ENCODE measurements at regions of chr1 and their contacts with region 1.

Region 1: GRCh38 chr1:223683586-223684487 is 18.3 kb upstream of the CAPN8 start:
- DNase-seq: peak in 8 of 9 donors; percentile 26 to 69 (median 50)
- ATAC-seq: peak; percentile 81
- H3K4me3 ChIP-seq: no peak overlapping the region
- H3K4me3 Mint-ChIP-seq: no peak overlapping the region
- H3K27ac ChIP-seq: no peak overlapping the region
- H3K27ac Mint-ChIP-seq: no peak overlapping the region
- H3K4me1 ChIP-seq: no peaks in the 10 kb centered on the region
- H3K4me1 Mint-ChIP-seq: no peaks in the 10 kb centered on the region
- H3K27me3 ChIP-seq: no peaks in the 10 kb centered on the region
- H3K27me3 Mint-ChIP-seq: peaks cover 0 to 30% (median 6%) of the 10 kb centered on the region in 5 donors

Region 2: GRCh38 chr1:222736972-222737371 is 946.9 kb before region 1 on chr1 and contains the start of gene FAM177B:
- CTCF ChIA-PET with region 1: interaction called, 3 read pairs
- POLR2A ChIA-PET with region 1: no interaction called
- intact Hi-C with region 1: loop called in 1 of 2 experiments (anchors 1 kb)
- DNase-seq: no peak
- ATAC-seq: no peak
- H3K4me3 ChIP-seq: no peak within 1 kb of the TSS
- H3K4me3 Mint-ChIP-seq: no peak within 1 kb of the TSS
- H3K27ac ChIP-seq: no peak within 1 kb of the TSS
- H3K27ac Mint-ChIP-seq: no peak within 1 kb of the TSS
- H3K4me1 ChIP-seq: no peaks in the 10 kb centered on the region
- H3K4me1 Mint-ChIP-seq: peaks cover 0 to 7% (median 0%) of the 10 kb centered on the region in 7 donors
- H3K27me3 ChIP-seq: no peaks in the 10 kb centered on the region
- H3K27me3 Mint-ChIP-seq: no peaks in the 10 kb centered on the region
- total RNA-seq, gene FAM177B: not detected

Region 3: GRCh38 chr1:223123011-223123610 is 560.7 kb before region 1 on chr1:
- CTCF ChIA-PET with region 1: interaction called, 11 read pairs
- POLR2A ChIA-PET with region 1: no interaction called
- intact Hi-C with region 1: no loop called
- DNase-seq: no peak
- ATAC-seq: no peak
- H3K4me3 ChIP-seq: peak overlapping the region; percentile 39
- H3K4me3 Mint-ChIP-seq: peak overlapping the region; percentile 48 to 90 (median 66)
- H3K27ac ChIP-seq: no peak overlapping the region
- H3K27ac Mint-ChIP-seq: peak overlapping the region in 1 of 9 donors; percentile 23
- H3K4me1 ChIP-seq: peaks cover 0 to 5% of the 10 kb centered on the region in 2 donors
- H3K4me1 Mint-ChIP-seq: peaks cover 0 to 11% (median 9%) of the 10 kb centered on the region in 7 donors
- H3K27me3 ChIP-seq: no peaks in the 10 kb centered on the region
- H3K27me3 Mint-ChIP-seq: peaks cover 0 to 11% (median 0%) of the 10 kb centered on the region in 5 donors

Region 4: DNA sequence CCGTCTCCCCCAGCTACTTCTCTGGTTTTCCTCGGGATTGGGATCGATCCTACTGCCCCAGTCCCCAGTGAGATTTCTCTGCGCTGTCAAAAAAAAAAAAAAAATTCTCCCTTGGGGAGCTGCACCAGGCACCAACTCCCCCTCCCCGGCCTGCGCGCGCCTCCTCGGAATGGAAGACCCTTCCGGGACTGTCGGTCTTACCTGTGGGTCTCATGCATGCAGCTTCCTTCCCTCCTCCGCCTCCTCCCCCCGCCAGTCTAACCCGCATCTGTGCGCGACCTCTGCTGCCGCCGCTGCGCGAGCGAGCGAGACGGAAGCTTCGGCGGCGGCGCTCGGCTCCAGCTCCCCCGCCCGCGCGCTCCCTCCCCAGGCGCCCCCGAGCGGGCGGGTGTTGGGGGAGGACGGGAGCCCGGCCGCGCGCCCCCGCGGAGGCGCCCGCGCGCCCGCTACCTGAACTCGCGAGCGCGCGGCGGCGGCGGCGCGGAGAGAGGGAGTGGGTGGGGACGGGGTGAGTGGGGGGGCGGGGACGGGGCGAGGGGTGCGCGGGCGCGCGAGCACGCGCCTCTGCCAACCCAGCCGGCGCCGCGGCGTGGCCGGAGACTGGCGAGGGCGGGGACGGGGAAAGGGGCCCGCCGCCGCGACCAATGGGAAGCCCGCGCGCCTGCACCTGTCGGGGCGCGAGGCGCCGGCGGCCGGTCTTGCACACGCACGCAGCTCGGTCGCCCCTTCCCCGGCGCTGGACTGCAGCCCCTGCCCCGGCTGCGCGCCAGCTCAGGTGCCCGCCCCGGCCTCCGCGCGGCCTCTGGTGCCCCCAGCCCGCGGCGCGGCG is 319.8 kb before region 1 on chr1 and contains the start of gene SUSD4:
- CTCF ChIA-PET with region 1: no interaction called
- POLR2A ChIA-PET with region 1: no interaction called
- intact Hi-C with region 1: loop called in 1 of 2 experiments (anchors 5 kb)
- DNase-seq: peak; percentile 54 to 87 (median 81)
- ATAC-seq: peak; percentile 92
- H3K4me3 ChIP-seq: peak within 1 kb of the TSS; percentile 83
- H3K4me3 Mint-ChIP-seq: peak within 1 kb of the TSS; percentile 83 to 96 (median 94)
- H3K27ac ChIP-seq: peak within 1 kb of the TSS; percentile 44
- H3K27ac Mint-ChIP-seq: peak within 1 kb of the TSS in 8 of 9 donors; percentile 61 to 91 (median 72)
- H3K4me1 ChIP-seq: no peaks in the 10 kb centered on the region
- H3K4me1 Mint-ChIP-seq: peaks cover 7 to 29% (median 27%) of the 10 kb centered on the region in 7 donors
- H3K27me3 ChIP-seq: no peaks in the 10 kb centered on the region
- H3K27me3 Mint-ChIP-seq: peaks cover 0 to 68% (median 0%) of the 10 kb centered on the region in 5 donors
- total RNA-seq, gene SUSD4: 0.10 to 20.3 (median 7.1) TPM

Region 5: GRCh38 chr1:223531742-223532341 is 152.0 kb before region 1 on chr1:
- CTCF ChIA-PET with region 1: no interaction called
- POLR2A ChIA-PET with region 1: no interaction called
- intact Hi-C with region 1: loop called in 1 of 2 experiments (anchors 5 kb)
- DNase-seq: peak in 5 of 9 donors; percentile 11 to 27 (median 19)
- ATAC-seq: peak; percentile 54
- H3K4me3 ChIP-seq: no peak overlapping the region
- H3K4me3 Mint-ChIP-seq: no peak overlapping the region
- H3K27ac ChIP-seq: no peak overlapping the region
- H3K27ac Mint-ChIP-seq: peak overlapping the region in 1 of 9 donors; percentile 2
- H3K4me1 ChIP-seq: no peaks in the 10 kb centered on the region
- H3K4me1 Mint-ChIP-seq: peaks cover 4 to 12% (median 9%) of the 10 kb centered on the region in 7 donors
- H3K27me3 ChIP-seq: no peaks in the 10 kb centered on the region
- H3K27me3 Mint-ChIP-seq: peaks cover 0 to 14% (median 0%) of the 10 kb centered on the region in 5 donors